ENCODE measurements at regions of chr5 and their contacts with region 1.

Region 1: DNA sequence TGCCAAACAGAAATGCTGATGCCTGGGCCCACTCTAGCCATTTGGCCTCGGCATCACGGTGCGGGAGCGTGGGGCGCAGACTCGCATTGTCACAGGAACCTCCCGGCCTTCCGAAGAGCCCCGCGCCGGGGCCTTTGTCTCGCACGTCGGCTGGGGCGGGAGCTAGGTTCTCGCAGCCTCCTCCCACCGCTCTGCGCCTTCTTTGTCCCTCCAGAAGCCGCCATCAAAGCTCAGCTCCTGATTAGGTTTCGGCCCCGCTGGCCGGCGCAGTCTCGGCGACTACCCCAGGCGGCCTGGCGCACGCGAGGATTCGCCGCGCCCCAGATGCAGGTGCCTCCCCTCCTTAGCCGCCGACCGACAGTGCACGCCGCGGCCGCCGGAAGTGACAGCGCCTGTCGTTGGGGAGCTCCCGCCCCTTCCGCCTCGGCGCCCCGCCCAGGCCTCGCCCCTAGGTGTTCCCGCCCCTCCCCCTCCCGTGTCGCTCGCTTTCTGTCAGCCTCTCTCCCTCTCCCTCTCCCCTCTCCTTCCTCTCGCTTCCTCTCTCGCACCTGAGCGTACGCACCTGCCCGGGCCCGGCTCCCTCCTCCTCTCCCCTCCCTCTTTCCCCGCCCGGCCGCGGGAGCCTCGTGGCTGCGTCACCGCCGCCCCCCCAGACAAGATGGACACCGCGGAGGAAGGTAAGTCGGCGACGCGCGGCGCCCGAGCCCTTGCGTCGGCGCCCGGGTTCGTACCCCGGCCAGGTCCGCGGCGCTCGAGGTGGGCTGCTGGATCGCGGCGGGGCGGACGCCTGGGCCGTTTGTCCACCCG is at the start of gene MARCHF6:
- DNase-seq: peak; percentile 96
- H3K4me3 Mint-ChIP-seq: peak within 1 kb of the TSS; percentile 99
- H3K27ac Mint-ChIP-seq: peak within 1 kb of the TSS; percentile 99
- H3K4me1 Mint-ChIP-seq: peaks cover 39% of the 10 kb centered on the region
- H3K27me3 Mint-ChIP-seq: no peaks in the 10 kb centered on the region
- total RNA-seq, gene MARCHF6: 103 to 108 TPM

Region 2: GRCh38 chr5:10257870-10258269 is 95.6 kb before region 1 on chr5:
- CTCF ChIA-PET with region 1: interaction called, 4 read pairs
- POLR2A ChIA-PET with region 1: interaction called, 36 read pairs
- intact Hi-C with region 1: loop called (anchors 2 kb)
- DNase-seq: no peak
- H3K4me3 Mint-ChIP-seq: no peak overlapping the region
- H3K27ac Mint-ChIP-seq: peak overlapping the region; percentile 63
- H3K4me1 Mint-ChIP-seq: peaks cover 47% of the 10 kb centered on the region
- H3K27me3 Mint-ChIP-seq: no peaks in the 10 kb centered on the region

Region 3: DNA sequence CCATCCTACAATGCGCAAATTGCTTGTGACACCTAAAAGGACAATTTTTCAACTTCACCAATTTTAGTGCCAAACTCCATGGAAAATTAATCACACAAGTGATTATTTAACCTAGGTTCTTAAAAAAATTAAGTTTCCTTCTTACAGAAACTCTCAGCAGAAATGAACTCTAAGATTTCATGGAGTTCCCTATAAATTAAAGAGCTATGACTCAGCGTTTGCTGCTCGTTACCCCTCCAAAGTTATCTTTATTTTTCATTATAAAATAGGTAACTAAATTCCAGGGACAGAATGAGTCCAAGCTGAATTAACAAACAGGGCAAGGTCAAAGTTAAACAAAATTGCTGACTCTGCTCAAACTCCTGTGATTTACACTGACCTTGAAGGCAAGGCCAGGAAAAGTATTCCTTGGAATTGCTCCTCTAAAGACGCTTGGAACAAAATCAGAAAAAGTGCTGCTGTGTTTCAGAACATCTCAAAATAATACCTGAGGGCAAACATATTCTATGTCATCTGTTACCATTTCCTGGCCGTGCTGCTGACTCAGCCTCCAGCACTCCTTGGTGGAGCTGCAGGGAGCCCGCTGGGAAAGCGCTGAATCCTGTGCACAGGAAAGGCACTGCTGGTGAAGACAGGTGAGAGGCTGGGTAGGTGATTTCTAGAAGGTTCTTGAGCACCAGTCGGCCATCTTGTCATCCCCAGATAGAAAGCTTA is 43.2 kb before region 1 on chr5:
- CTCF ChIA-PET with region 1: no interaction called
- POLR2A ChIA-PET with region 1: interaction called, 3 read pairs
- intact Hi-C with region 1: loop called (anchors 5 kb)
- DNase-seq: no peak
- H3K4me3 Mint-ChIP-seq: no peak overlapping the region
- H3K27ac Mint-ChIP-seq: no peak overlapping the region
- H3K4me1 Mint-ChIP-seq: peaks cover 15% of the 10 kb centered on the region
- H3K27me3 Mint-ChIP-seq: peaks cover 14% of the 10 kb centered on the region

Region 4: GRCh38 chr5:10424124-10424731 is 70.8 kb after region 1 on chr5:
- CTCF ChIA-PET with region 1: interaction called, 8 read pairs
- POLR2A ChIA-PET with region 1: interaction called, 14 read pairs
- intact Hi-C with region 1: loop called (anchors 1 kb)
- DNase-seq: no peak
- H3K4me3 Mint-ChIP-seq: no peak overlapping the region
- H3K27ac Mint-ChIP-seq: no peak overlapping the region
- H3K4me1 Mint-ChIP-seq: peaks cover 30% of the 10 kb centered on the region
- H3K27me3 Mint-ChIP-seq: no peaks in the 10 kb centered on the region

Region 5: DNA sequence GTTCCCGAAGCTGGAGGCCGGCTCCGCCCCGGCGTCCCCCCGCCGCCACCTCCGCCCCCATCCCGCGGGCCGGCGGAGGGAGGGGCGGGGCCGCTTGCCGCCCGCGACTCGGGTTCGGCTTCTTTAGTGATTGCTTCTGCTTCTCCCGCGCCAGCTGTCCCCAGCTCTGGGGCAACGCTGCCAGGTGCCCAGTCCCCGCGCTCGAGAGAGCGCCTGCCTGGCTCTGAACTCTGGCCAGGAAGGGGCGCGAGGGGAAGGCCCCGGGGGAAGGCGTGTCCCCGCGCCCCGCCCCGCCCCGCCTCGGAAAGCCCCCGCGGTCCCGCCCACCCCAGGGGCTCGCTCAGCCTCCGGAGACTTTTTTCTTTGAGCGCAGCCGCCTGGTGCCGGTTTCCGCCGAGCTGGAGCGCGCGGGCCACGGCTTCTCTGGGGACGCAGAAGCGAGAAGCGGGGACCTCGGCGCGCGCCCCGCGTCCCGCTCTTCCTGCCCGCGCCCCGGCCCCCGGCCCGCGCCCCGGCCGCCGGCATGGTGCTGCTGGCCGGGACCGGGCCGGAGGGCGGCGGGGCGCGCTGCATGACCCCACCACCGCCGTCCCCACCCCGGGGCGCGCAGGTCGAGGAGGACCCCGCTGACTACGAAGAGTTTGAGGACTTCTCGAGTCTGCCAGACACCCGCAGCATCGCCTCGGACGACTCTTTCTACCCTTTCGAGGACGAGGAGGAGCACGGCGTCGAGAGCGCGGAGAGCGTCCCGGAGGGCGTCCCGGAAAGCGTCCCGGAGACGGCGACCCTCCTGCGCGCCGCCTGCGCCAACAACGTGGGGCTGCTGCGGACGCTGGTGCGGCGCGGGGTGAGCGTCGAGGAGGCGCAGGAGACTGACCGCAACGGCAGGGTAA is 210.7 kb after region 1 on chr5 and contains the start of gene ANKRD33B:
- CTCF ChIA-PET with region 1: no interaction called
- POLR2A ChIA-PET with region 1: no interaction called
- intact Hi-C with region 1: loop called (anchors 5 kb)
- DNase-seq: peak; percentile 88
- H3K4me3 Mint-ChIP-seq: peak within 1 kb of the TSS; percentile 84
- H3K27ac Mint-ChIP-seq: peak within 1 kb of the TSS; percentile 79
- H3K4me1 Mint-ChIP-seq: peaks cover 21% of the 10 kb centered on the region
- H3K27me3 Mint-ChIP-seq: peaks cover 3% of the 10 kb centered on the region
- total RNA-seq, gene ANKRD33B: 9.9 to 10.0 TPM

Region 6: DNA sequence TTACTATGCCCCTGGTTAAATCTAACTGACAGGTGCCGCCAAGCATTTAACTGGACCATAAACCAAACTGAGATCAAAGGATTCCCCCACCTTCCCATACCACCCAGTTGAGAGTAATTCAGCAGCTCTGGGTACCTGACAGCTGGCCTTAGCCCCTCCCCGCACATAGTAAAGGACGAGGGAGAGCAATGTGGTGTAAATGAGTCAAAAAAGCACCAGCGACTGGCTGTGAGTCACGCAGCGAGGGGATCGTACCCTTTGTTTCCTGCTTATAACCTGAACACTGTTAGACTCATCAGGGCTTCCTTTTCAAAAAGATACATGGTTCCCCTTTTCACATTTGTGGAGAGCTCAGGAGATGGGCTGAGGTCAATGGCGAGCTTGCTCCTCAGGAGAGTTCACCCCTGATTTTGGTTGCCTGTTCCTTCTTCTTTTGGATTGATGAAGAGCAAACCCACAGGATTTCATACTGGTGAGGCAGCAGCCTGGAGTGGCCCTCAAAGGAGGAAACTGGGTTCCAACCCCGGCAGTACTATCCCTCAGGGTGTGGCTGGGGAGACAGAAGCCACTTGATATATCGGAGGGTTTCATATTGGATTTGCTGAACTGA is 281.9 kb after region 1 on chr5:
- CTCF ChIA-PET with region 1: interaction called, 3 read pairs
- POLR2A ChIA-PET with region 1: interaction called, 8 read pairs
- intact Hi-C with region 1: loop called (anchors 2 kb)
- DNase-seq: peak; percentile 93
- H3K4me3 Mint-ChIP-seq: peak overlapping the region; percentile 77
- H3K27ac Mint-ChIP-seq: peak overlapping the region; percentile 98
- H3K4me1 Mint-ChIP-seq: peaks cover 62% of the 10 kb centered on the region
- H3K27me3 Mint-ChIP-seq: no peaks in the 10 kb centered on the region

Region 7: GRCh38 chr5:10649666-10650380 is 296.4 kb after region 1 on chr5:
- CTCF ChIA-PET with region 1: no interaction called
- POLR2A ChIA-PET with region 1: no interaction called
- intact Hi-C with region 1: no loop called
- DNase-seq: no peak
- H3K4me3 Mint-ChIP-seq: no peak overlapping the region
- H3K27ac Mint-ChIP-seq: no peak overlapping the region
- H3K4me1 Mint-ChIP-seq: peaks cover 9% of the 10 kb centered on the region
- H3K27me3 Mint-ChIP-seq: no peaks in the 10 kb centered on the region